OCI-LY7 (cell line): ENCODE measurements at regions of chr3 and their contacts with region 1.

Region 1: GRCh38 chr3:125916376-125916978 is 52.5 kb upstream of the ROPN1B start:
- DNase-seq: peak; percentile 93
- H3K4me3 ChIP-seq: peak overlapping the region; percentile 73
- H3K27ac ChIP-seq: peak overlapping the region; percentile 84
- H3K4me1 ChIP-seq: peaks cover 23% of the 10 kb centered on the region
- CTCF ChIP-seq: peak; percentile 51

Region 2: GRCh38 chr3:125767641-125768040 is 148.8 kb before region 1 on chr3:
- CTCF ChIA-PET with region 1: no interaction called
- POLR2A ChIA-PET with region 1: no interaction called
- intact Hi-C with region 1: loop called (anchors 5 kb)
- DNase-seq: no peak
- H3K4me3 ChIP-seq: no peak overlapping the region
- H3K27ac ChIP-seq: no peak overlapping the region
- H3K4me1 ChIP-seq: peaks cover 4% of the 10 kb centered on the region
- CTCF ChIP-seq: no peak

Region 3: DNA sequence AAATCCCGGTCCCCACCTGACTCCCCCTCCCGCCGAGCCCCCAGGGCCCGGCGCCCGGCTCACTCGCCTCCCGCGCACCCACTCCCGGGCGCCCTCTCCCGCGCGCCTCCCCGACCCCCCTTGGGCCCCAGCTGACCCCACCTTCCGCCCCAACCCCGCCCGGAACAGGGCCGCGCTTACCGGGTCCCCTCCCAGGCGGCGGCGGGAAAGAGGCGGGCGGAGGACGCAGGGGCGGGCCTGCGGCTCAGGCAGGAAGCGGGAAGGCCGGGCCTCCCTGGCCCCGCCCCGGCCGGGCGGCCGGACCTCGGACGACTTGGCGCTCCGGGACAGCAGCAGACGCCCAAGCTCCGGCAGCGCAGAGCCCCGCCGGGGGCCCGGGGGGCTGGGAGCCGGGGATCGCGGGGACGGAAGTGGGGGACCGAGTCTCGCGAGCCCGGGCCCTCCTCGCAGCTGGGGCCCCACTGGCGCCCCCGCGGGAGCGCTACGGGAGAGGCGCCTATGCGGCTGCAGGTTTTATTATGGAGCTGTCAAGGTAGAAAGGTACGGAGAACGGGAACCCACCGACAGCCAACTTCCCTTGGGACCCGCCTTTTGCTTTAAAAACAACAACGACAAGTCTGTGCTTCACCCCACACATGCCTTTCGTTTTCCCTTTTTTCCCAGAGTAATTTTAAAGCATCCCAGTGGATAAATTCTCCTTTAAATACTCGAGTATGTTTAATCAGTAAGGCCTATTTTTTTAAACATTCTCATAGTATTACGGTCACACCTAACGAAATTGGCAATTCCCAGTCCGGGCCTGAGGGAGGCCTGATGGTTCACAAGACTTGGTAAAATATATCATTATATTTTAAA is 167.7 kb after region 1 on chr3 and contains the start of gene SLC41A3:
- CTCF ChIA-PET with region 1: no interaction called
- POLR2A ChIA-PET with region 1: no interaction called
- intact Hi-C with region 1: loop called (anchors 2 kb)
- DNase-seq: peak; percentile 90
- H3K4me3 ChIP-seq: peak within 1 kb of the TSS; percentile 89
- H3K27ac ChIP-seq: peak within 1 kb of the TSS; percentile 62
- H3K4me1 ChIP-seq: peaks cover 7% of the 10 kb centered on the region
- CTCF ChIP-seq: peak; percentile 74
- total RNA-seq, gene SLC41A3: 26.6 and 35.9 TPM in 2 replicates